ENCODE measurements at regions of chr4 and their contacts with region 1.

Region 1: DNA sequence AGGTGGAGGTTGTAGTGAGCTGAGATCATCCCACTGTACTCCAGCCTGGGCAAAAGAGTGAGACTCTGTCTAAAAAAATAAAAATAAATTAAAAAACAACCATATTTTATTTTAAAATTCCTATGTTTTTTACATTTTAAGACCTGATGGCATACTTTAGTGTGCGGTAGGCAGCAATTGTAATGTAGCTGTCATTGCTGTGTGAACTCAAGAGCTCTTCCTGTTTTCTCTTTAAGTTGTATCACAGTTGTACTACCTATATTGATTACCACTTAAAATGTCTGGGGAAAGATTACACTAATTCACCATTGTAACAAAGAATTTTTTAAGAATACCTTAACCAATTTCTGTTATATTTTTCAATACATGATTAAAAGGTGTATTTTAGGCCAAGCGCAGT is 27.3 kb downstream of the ABCE1 start:
- DNase-seq: no peak
- ATAC-seq: no peak
- H3K4me3 ChIP-seq: no peak overlapping the region
- H3K27ac ChIP-seq: peak overlapping the region in 1 of 10 donors; percentile 62
- H3K4me1 ChIP-seq: no peaks in the 10 kb centered on the region
- H3K27me3 ChIP-seq: no peaks in the 10 kb centered on the region
- CTCF ChIP-seq: no peak

Region 2: DNA sequence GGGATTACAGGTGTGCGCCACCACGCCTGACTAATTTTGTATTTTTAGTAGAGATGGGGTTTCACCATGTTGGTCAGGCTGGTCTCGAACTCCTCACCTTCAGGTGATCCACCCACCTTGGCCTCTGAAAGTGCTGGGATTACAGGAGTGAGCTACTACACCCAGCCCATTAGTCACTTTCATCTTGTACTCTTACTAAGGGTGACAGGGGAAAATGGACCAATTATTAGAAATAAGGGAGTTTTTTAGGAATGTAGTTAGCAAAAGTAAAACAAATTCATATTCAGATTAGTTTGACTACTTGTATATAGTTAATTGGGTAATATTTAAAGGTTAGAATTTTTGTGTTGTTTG is 1585.7 kb before region 1 on chr4:
- intact Hi-C with region 1: loop called in 1 of 10 experiments (anchors 10 kb)
- DNase-seq: no peak
- ATAC-seq: no peak
- H3K4me3 ChIP-seq: no peak overlapping the region
- H3K27ac ChIP-seq: no peak overlapping the region
- H3K4me1 ChIP-seq: no peaks in the 10 kb centered on the region
- H3K27me3 ChIP-seq: no peaks in the 10 kb centered on the region
- CTCF ChIP-seq: no peak

Region 3: GRCh38 chr4:144480068-144480467 is 645.3 kb before region 1 on chr4:
- intact Hi-C with region 1: no loop called
- DNase-seq: no peak
- ATAC-seq: no peak
- H3K4me3 ChIP-seq: no peak overlapping the region
- H3K27ac ChIP-seq: no peak overlapping the region
- H3K4me1 ChIP-seq: no peaks in the 10 kb centered on the region
- H3K27me3 ChIP-seq: no peaks in the 10 kb centered on the region
- CTCF ChIP-seq: no peak

Region 4: GRCh38 chr4:144531841-144532240 is 593.6 kb before region 1 on chr4:
- intact Hi-C with region 1: no loop called
- DNase-seq: no peak
- ATAC-seq: no peak
- H3K4me3 ChIP-seq: no peak overlapping the region
- H3K27ac ChIP-seq: no peak overlapping the region
- H3K4me1 ChIP-seq: no peaks in the 10 kb centered on the region
- H3K27me3 ChIP-seq: no peaks in the 10 kb centered on the region
- CTCF ChIP-seq: no peak